ENCODE measurements at regions of chr5 and their contacts with region 1.

Region 1: GRCh38 chr5:60463179-60463868 is 236.6 kb downstream of the DEPDC1B start:
- DNase-seq: no peak
- CTCF ChIP-seq: no peak

Region 2: GRCh38 chr5:60352992-60353599 is 110.2 kb before region 1 on chr5:
- CTCF ChIA-PET with region 1: no interaction called
- POLR2A ChIA-PET with region 1: no interaction called
- DNase-seq: no peak
- CTCF ChIP-seq: no peak

Region 3: GRCh38 chr5:60436518-60436917 is 26.8 kb before region 1 on chr5:
- CTCF ChIA-PET with region 1: interaction called, 12 read pairs
- POLR2A ChIA-PET with region 1: no interaction called
- DNase-seq: no peak
- CTCF ChIP-seq: no peak

Measured in GM10248 (cell line).